ENCODE measurements at regions of chr12 and their contacts with region 1.

Region 1: DNA sequence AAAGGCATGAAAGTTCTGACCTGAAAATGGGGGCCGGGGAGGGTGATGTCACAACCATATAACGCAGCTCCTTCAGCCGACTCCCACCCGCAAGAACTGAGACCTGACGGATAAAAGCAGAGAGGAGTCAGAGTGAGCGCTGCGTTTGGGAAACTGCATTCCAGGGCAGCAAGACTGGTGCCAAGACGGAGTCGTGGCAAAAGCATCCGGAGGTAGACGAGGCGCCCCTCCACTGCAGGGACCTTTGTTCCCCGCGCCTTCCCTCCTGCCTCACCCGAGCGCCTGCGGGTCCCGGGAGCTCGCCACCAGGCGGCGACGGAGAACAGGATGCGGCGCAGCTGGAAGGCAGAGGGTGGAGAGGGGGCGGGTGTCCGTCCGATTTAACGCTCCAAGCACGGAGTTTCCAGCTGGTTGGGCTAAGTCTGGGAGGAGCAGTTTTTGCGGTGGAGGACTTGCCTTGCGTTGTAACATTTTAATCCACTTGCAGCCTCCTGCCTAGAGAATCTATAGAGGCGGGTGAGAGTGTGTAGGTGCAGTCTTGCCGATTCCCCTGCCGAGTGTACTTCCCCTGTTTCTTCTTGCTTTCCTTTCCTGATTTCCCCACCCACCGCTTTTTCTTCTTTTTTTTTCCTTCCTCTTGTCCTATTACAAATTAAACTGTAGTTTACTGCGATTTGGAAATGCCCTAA is 1.2 kb upstream of the CPNE8 start:
- DNase-seq: peak; percentile 92
- ATAC-seq: peak; percentile 76
- H3K4me3 Mint-ChIP-seq: peak overlapping the region; percentile 93
- H3K27ac Mint-ChIP-seq: peak overlapping the region; percentile 68; the same call in 1 of the 2 replicates
- H3K4me1 Mint-ChIP-seq: peaks cover 19% of the 10 kb centered on the region
- H3K27me3 Mint-ChIP-seq: peaks cover 4% of the 10 kb centered on the region
- CTCF ChIP-seq: peak; percentile 39; the same call in 1 of the 2 replicates

Region 2: GRCh38 chr12:38664661-38665269 is 241.9 kb before region 1 on chr12:
- CTCF ChIA-PET with region 1: interaction called, 16 read pairs
- POLR2A ChIA-PET with region 1: no interaction called
- DNase-seq: peak; percentile 23
- ATAC-seq: peak; percentile 91
- H3K4me3 Mint-ChIP-seq: no peak overlapping the region
- H3K27ac Mint-ChIP-seq: no peak overlapping the region
- H3K4me1 Mint-ChIP-seq: no peaks in the 10 kb centered on the region
- H3K27me3 Mint-ChIP-seq: no peaks in the 10 kb centered on the region
- CTCF ChIP-seq: no peak

Region 3: DNA sequence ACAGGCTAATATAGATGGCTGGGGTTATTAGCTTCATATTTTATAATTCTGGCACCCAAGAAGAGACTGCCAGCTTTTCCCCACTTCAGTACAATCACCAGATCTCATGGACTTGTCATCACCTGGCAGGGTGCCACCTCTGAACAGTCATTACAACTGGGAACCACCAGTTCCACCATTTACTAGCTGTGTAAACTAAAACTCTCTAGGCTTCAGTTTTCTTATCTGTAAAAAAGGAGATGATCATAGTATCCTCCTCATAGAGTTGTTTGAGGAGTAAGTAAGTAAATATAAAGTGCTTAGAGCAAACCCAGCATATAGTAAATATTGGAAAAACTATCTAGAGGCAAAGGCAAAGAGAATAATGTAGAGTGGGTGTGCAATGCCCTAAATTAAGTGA is 20.6 kb before region 1 on chr12:
- CTCF ChIA-PET with region 1: no interaction called
- POLR2A ChIA-PET with region 1: no interaction called
- DNase-seq: no peak
- ATAC-seq: no peak
- H3K4me3 Mint-ChIP-seq: no peak overlapping the region
- H3K27ac Mint-ChIP-seq: no peak overlapping the region
- H3K4me1 Mint-ChIP-seq: no peaks in the 10 kb centered on the region
- H3K27me3 Mint-ChIP-seq: no peaks in the 10 kb centered on the region
- CTCF ChIP-seq: no peak

Region 4: GRCh38 chr12:38921025-38921677 is 14.5 kb after region 1 on chr12:
- CTCF ChIA-PET with region 1: interaction called, 14 read pairs
- POLR2A ChIA-PET with region 1: no interaction called
- DNase-seq: peak; percentile 53
- ATAC-seq: peak; percentile 64
- H3K4me3 Mint-ChIP-seq: no peak overlapping the region
- H3K27ac Mint-ChIP-seq: no peak overlapping the region
- H3K4me1 Mint-ChIP-seq: no peaks in the 10 kb centered on the region
- H3K27me3 Mint-ChIP-seq: no peaks in the 10 kb centered on the region
- CTCF ChIP-seq: peak; percentile 41

Region 5: DNA sequence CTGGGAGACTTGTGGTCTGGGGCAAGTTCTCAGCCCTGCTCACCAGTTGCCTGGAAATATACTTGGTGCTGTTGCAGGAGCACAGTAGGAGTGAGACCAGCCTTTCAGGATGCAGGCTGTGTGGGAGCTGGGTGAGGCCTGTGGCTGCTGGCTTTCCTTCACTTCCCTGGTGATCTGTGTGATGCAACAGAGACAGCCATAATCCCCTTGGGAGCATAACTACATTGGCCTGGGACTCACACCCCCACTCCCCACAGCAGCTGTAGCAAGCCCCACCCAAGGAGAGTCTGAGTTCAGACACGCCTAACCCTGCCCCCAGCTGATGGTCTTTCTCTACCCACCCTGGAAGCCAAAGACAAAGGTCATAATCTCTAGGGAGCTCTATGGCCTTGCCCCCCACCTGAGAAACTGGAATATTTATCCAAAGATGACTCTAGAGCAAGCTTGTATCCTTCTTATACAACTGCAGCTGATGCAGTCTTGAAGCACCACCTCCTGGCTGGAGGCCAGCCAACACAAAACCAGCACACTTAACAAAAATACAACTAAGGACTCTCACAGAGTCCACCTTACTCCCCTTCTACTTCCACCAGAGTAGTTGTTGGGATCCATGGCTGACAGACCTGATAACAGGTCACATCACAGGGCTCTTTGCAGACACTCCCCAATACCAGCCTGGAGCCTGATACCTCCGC is 189.2 kb after region 1 on chr12:
- CTCF ChIA-PET with region 1: interaction called, 12 read pairs
- POLR2A ChIA-PET with region 1: no interaction called
- DNase-seq: no peak
- ATAC-seq: peak; percentile 44
- H3K4me3 Mint-ChIP-seq: no peak overlapping the region
- H3K27ac Mint-ChIP-seq: no peak overlapping the region
- H3K4me1 Mint-ChIP-seq: peaks cover 27% of the 10 kb centered on the region
- H3K27me3 Mint-ChIP-seq: no peaks in the 10 kb centered on the region; the same call in 1 of the 2 replicates
- CTCF ChIP-seq: no peak

Region 6: GRCh38 chr12:39103552-39104165 is 197.0 kb after region 1 on chr12:
- CTCF ChIA-PET with region 1: interaction called, 43 read pairs
- POLR2A ChIA-PET with region 1: no interaction called
- DNase-seq: no peak
- ATAC-seq: peak; percentile 96
- H3K4me3 Mint-ChIP-seq: no peak overlapping the region
- H3K27ac Mint-ChIP-seq: no peak overlapping the region
- H3K4me1 Mint-ChIP-seq: peaks cover 23% of the 10 kb centered on the region
- H3K27me3 Mint-ChIP-seq: no peaks in the 10 kb centered on the region
- CTCF ChIP-seq: peak; percentile 69